SK-N-SH (cell line): ENCODE measurements at regions of chr9 and their contacts with region 1.

Region 1: GRCh38 chr9:122912964-122913673 is at the start of gene ZBTB6:
- DNase-seq: peak; percentile 81
- H3K4me3 ChIP-seq: peak within 1 kb of the TSS; percentile 72 to 93
- H3K27ac ChIP-seq: peak within 1 kb of the TSS; percentile 86 to 96
- H3K4me1 ChIP-seq: peaks cover 0 to 7% of the 10 kb centered on the region in 2 experiments; a peak in 2 of 4 replicates
- H3K27me3 ChIP-seq: no peaks in the 10 kb centered on the region
- CTCF ChIP-seq: no peak
- EP300 ChIP-seq: no peak
- RAD21 ChIP-seq: no peak; the same call in 1 of the 2 replicates
- polyA plus RNA-seq, gene ZBTB6: 2.2 and 3.2 TPM in 2 replicates

Region 2: DNA sequence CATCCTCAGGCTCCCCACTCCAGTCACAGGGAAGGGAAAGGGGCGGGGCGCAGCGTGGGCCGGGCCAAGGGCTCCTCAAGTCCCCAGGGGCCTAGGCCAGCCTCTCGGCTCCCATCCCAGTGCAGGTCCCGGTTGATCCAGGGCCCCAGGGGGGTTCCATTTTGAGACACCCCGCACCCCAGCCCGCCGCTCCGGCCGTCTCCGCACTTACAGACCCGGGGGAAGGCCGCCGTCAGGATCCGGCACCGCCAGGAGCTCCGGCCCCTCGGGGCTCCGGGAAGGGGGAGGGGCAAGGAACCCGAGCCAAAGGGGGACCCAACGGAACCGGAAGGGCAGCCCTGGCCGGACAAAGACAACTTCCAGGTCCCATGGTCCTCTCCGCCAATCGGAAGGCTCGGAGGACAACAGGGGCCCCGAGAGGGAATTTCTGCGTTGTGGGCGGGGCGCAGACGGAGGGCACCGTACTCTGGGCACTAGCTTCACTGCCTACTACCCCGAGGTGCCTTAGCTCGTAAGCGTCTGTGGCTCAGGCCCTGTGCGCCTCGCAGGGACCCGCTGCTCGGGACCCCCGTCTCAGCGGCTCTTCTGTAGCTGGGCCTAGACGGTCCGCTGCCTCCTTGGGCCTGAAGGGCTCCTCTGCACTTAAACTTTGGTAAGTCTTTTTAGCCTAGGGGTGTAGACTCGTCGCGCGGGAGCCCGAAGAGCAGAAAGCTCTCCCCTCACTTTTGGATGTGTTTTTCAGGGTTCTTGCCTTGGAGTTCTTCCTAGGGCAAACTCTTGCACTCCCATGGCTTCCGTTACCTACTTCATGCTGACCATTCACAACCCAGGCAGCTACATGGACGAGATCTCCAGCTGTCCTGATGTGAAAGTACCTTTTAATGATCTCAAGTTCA is 18.4 kb after region 1 on chr9 and contains the start of gene ZBTB26:
- CTCF ChIA-PET with region 1: interaction called, 5 read pairs
- POLR2A ChIA-PET with region 1: interaction called, 18 read pairs
- DNase-seq: peak; percentile 95
- H3K4me3 ChIP-seq: peak within 1 kb of the TSS; percentile 84
- H3K27ac ChIP-seq: peak within 1 kb of the TSS; percentile 77 to 89
- H3K4me1 ChIP-seq: peaks cover 0 to 9% of the 10 kb centered on the region in 2 experiments; a peak in 2 of 4 replicates
- H3K27me3 ChIP-seq: no peaks in the 10 kb centered on the region
- CTCF ChIP-seq: no peak
- EP300 ChIP-seq: peak in 1 of 2 experiments; percentile 21; a peak in 1 of 4 replicates
- RAD21 ChIP-seq: no peak
- polyA plus RNA-seq, gene ZBTB26: 3.9 and 6.0 TPM in 2 replicates

Region 3: DNA sequence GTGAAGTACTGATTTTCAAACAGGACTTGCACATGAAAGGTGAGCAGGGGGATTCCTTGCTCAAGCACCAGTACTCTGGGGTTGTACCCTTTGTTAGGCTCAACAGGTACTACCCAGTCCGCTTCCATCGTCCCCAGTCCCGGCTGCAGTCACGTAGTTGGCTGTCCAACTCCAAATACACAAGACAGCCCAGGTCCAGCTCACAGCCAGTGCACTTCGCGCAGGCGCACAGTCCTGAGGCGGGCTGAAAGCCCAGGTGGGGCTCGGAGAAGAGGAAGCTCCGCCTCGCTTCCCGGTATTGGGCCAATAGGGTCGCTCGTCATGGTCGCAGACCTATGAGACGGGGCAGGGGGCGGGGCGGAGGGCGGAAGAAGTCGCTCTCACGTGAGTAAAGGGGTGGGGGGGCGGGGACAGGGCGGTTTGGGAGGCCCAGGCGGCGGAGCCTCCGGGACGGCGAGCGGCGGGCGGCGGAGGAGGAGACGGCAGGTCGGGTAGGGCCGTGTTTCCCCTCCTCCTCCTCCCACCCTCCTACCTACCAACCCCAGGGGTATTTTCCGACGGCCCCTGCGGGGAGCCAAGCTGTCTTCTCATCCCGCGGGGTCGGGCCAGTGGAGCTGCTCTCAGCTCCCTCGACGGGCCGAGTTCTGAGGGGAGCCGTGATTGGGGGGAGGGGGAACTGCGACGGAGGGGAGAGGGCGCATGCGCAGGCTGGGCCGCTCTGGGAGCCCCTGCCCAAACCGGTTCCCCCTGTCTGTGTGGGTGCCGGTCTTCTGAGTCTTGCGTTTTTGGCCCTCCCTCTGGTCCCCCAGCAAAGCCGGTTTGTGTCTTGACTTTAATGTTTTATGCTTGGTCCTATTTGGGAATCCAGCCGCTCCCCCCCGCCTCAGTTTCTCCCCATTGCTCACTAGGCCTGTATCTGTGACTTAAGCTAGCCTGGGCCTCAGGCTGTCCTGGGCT is 27.8 kb after region 1 on chr9 and contains the start of gene RABGAP1:
- CTCF ChIA-PET with region 1: no interaction called
- POLR2A ChIA-PET with region 1: interaction called, 14 read pairs
- DNase-seq: peak; percentile 96
- H3K4me3 ChIP-seq: peak within 1 kb of the TSS; percentile 71 to 76
- H3K27ac ChIP-seq: peak within 1 kb of the TSS; percentile 76 to 82
- H3K4me1 ChIP-seq: peaks cover 0 to 8% of the 10 kb centered on the region in 2 experiments; a peak in 2 of 4 replicates
- H3K27me3 ChIP-seq: no peaks in the 10 kb centered on the region
- CTCF ChIP-seq: no peak
- EP300 ChIP-seq: no peak; a peak in 1 of 4 replicates
- RAD21 ChIP-seq: no peak
- polyA plus RNA-seq, gene RABGAP1: 20.2 and 29.2 TPM in 2 replicates